ENCODE measurements at regions of chr17 and their contacts with region 1.

Region 1: GRCh38 chr17:81101614-81102306 is 63.5 kb upstream of the PVALEF start:
- DNase-seq: peak; percentile 77 to 92 (median 82)
- ATAC-seq: peak; percentile 68 to 88 (median 86)
- H3K4me3 ChIP-seq: no peak overlapping the region
- H3K27ac ChIP-seq: no peak overlapping the region
- H3K4me1 ChIP-seq: peaks cover 0 to 27% (median 10%) of the 10 kb centered on the region in 12 donors
- H3K27me3 ChIP-seq: no peaks in the 10 kb centered on the region
- CTCF ChIP-seq: peak; percentile 98 to 100 (median 100)
- POLR2A ChIP-seq: no peak

Region 2: DNA sequence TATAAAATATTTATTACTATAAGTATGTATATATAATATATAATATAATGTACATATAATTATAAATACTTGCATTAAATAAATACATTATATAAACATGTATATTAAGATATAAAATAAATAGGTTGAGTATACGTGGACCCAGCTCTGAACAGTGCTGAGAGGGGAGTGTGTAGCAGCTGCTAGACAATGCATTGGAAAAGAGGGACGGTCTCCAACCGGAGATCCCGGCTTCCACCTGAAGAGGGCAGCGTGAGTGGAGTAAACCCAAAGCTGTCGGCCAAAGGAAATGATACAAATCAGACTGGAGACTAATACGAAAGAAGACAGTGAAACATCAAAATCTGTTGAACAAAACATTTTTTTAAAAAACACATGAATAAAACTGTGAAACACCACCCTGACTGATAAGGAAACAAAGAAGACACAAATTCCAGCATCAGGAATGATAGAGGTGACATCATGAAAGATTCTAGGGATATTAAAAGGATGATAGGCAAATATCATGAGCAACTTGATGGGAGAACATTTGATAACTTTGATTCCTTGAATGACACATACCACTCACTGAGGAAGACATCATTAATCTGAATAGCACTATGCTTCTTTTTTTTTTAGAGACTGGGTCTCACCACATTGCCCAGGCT is 235.5 kb before region 1 on chr17:
- intact Hi-C with region 1: loop called in 1 of 10 experiments (anchors 10 kb)
- DNase-seq: peak; percentile 49 to 81 (median 58)
- ATAC-seq: peak in 3 of 4 donors; percentile 69 to 80 (median 77)
- H3K4me3 ChIP-seq: no peak overlapping the region
- H3K27ac ChIP-seq: no peak overlapping the region
- H3K4me1 ChIP-seq: peaks cover 0 to 21% (median 2%) of the 10 kb centered on the region in 12 donors
- H3K27me3 ChIP-seq: no peaks in the 10 kb centered on the region
- CTCF ChIP-seq: peak; percentile 58 to 90 (median 74)
- POLR2A ChIP-seq: no peak

Region 3: DNA sequence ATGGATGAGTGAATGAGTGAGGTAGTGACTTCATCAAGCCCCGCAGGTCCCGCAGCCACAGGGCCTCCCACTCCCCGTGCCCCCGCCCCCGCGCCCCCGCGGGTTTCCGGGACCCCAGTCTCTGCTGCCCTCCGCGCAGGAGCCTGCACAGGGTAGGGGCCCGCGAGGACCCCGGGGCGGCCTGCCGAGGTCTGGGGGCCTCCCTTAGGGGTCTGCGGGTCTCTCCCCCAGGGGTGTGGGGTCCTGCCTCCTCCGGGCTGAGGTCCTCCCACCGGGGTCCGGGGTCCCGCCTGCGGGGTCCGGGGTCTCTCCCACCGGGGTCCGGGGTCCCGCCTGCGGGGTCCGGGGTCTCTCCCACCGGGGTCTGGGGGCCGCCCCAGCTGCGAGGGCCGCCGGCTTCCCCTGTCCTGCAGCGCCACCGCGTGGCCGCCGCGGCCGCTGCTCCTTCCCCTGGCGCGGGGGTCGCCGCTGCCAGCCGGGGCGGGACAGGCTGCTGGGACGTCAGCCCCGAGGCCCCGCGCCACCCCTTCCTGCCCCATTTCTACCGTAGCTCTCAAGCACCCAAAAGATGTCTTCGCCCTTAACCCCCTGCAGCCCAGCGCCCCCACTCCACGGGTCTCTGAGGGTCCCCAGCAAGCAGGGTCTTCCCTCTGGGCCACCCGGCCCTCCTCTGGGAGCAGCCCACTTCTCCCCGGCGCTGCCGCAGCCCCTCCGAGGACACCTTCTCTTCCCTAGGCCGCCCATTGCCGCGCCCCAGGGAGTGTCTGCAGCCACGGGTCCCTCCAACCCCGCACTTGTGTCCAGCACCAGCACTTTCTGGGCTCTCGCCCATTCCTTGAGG is 120.5 kb before region 1 on chr17:
- intact Hi-C with region 1: loop called in 3 of 10 experiments (anchors 5 kb)
- DNase-seq: peak in 1 of 5 donors; percentile 62
- ATAC-seq: peak in 2 of 4 donors; percentile 31
- H3K4me3 ChIP-seq: peak overlapping the region in 3 of 12 donors; percentile 13 to 15 (median 13)
- H3K27ac ChIP-seq: no peak overlapping the region
- H3K4me1 ChIP-seq: peaks cover 0 to 18% (median 8%) of the 10 kb centered on the region in 12 donors
- H3K27me3 ChIP-seq: peaks cover 0 to 17% (median 10%) of the 10 kb centered on the region in 9 donors
- CTCF ChIP-seq: peak; percentile 69 to 93 (median 85)
- POLR2A ChIP-seq: no peak

Region 4: GRCh38 chr17:80991645-80992076 is 110.1 kb before region 1 on chr17 and contains the start of gene CHMP6:
- intact Hi-C with region 1: loop called in 8 of 10 experiments (anchors 1 to 5 kb)
- DNase-seq: peak; percentile 80 to 90 (median 87)
- ATAC-seq: peak in 3 of 4 donors; percentile 50 to 69 (median 69)
- H3K4me3 ChIP-seq: peak within 1 kb of the TSS; percentile 68 to 100 (median 96)
- H3K27ac ChIP-seq: peak within 1 kb of the TSS in 11 of 12 donors; percentile 41 to 86 (median 64)
- H3K4me1 ChIP-seq: peaks cover 0 to 40% (median 27%) of the 10 kb centered on the region in 12 donors
- H3K27me3 ChIP-seq: peaks cover 0 to 7% (median 0%) of the 10 kb centered on the region in 9 donors
- CTCF ChIP-seq: peak in 7 of 12 donors; percentile 28 to 48 (median 36)
- POLR2A ChIP-seq: peak in 1 of 2 donors; percentile 48
- total RNA-seq, gene CHMP6: 17.9 to 25.9 (median 19.4) TPM

Region 5: GRCh38 chr17:81018044-81018802 is 83.5 kb before region 1 on chr17:
- intact Hi-C with region 1: loop called in 5 of 10 experiments (anchors 1 to 5 kb)
- DNase-seq: peak in 1 of 5 donors; percentile 40
- ATAC-seq: peak; percentile 41 to 71 (median 45)
- H3K4me3 ChIP-seq: peak overlapping the region in 11 of 12 donors; percentile 16 to 56 (median 41)
- H3K27ac ChIP-seq: peak overlapping the region; percentile 8 to 87 (median 71)
- H3K4me1 ChIP-seq: peaks cover 0 to 30% (median 19%) of the 10 kb centered on the region in 12 donors
- H3K27me3 ChIP-seq: no peaks in the 10 kb centered on the region
- CTCF ChIP-seq: no peak
- POLR2A ChIP-seq: no peak

Region 6: GRCh38 chr17:81027591-81028505 is 73.9 kb before region 1 on chr17:
- intact Hi-C with region 1: loop called in 9 of 10 experiments (anchors 1 to 5 kb)
- DNase-seq: peak in 1 of 5 donors; percentile 18
- ATAC-seq: no peak
- H3K4me3 ChIP-seq: no peak overlapping the region
- H3K27ac ChIP-seq: no peak overlapping the region
- H3K4me1 ChIP-seq: peaks cover 0 to 38% (median 26%) of the 10 kb centered on the region in 12 donors
- H3K27me3 ChIP-seq: peaks cover 0 to 33% (median 7%) of the 10 kb centered on the region in 9 donors
- CTCF ChIP-seq: no peak
- POLR2A ChIP-seq: no peak

Region 7: GRCh38 chr17:81142301-81143199 is 40.8 kb after region 1 on chr17:
- intact Hi-C with region 1: no loop called
- DNase-seq: peak; percentile 71 to 88 (median 81)
- ATAC-seq: peak; percentile 90 to 97 (median 94)
- H3K4me3 ChIP-seq: no peak overlapping the region
- H3K27ac ChIP-seq: no peak overlapping the region
- H3K4me1 ChIP-seq: peaks cover 0 to 9% (median 4%) of the 10 kb centered on the region in 12 donors
- H3K27me3 ChIP-seq: no peaks in the 10 kb centered on the region
- CTCF ChIP-seq: peak; percentile 57 to 82 (median 70)
- POLR2A ChIP-seq: no peak

Measured in heart left ventricle (tissue), 16 donors.